GM12878 (cell line): ENCODE measurements at regions of chr5 and their contacts with region 1.

Region 1: DNA sequence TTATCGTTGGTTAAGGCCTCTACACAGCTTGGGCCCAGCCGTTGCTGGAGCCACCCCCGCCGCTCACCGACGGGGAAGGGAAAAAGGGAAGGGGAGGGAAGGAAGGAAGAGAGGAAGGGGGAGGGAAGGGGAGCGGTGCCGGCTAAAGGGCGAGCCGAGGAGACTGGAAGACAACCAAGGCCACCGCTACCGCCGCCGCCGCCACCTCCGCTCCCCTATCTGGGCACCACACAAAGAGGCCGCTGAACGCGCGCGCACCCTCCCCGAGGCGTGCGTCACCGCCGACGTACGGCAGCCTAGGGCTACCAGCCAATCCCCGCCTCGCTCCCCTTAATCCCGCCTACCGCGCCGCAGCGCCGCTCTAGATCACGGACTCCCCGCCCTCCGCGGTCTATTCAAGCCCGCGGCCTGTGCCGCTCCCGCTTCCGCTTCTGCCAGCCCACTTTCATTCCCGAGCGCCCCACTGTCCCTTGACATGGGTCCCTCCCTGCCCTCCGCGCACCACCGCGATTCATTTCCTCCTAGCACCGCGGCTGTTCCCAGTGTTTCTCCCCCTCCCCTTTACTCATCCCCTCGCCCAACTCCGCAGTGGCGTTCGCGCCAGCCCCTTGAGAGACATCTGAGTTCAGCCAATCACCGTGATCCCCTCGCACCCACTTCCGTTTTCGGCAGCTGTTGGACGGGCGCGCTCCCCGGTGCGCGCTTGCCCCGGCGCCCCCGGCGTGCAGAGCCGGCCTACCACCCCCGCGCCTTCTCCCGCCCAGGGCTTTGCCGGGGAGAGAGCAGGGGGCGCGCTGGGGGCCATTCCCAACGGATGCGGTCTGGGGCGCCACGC is at the start of gene HNRNPA0:
- DNase-seq: peak; percentile 88
- ATAC-seq: peak; percentile 88
- H3K4me3 ChIP-seq: peak within 1 kb of the TSS; percentile 91
- H3K27ac ChIP-seq: peak within 1 kb of the TSS; percentile 96
- H3K4me1 ChIP-seq: peaks cover 28% of the 10 kb centered on the region
- H3K27me3 ChIP-seq: no peaks in the 10 kb centered on the region
- CTCF ChIP-seq: no peak
- EP300 ChIP-seq: peak in 1 of 2 experiments; percentile 100; a peak in 2 of 4 replicates
- POLR2A ChIP-seq: peak; percentile 86
- RAD21 ChIP-seq: no peak
- polyA plus RNA-seq, gene HNRNPA0: 7.3 to 8.2 TPM

Region 2: DNA sequence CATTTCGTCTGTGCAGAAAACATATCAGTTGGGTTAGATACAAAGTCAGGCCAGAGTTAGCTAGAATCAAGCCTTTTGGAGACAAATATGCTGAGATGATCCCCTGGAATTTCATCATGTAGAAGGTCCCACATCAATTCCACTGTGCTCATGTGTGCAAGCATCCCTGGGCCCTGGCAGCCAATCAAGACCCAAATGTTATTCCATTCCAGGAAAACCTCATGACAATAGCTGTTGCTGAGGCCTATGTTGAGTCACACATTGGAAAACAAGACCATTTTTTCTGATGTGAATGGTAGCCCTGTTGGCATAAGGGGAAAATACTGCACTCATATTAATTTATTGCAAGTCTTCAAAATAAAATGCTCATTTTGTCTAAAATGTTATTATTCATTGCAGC is 266.7 kb before region 1 on chr5:
- CTCF ChIA-PET with region 1: no interaction called
- POLR2A ChIA-PET with region 1: no interaction called
- RAD21 ChIA-PET with region 1: no interaction called
- SMC1A ChIA-PET with region 1: no interaction called
- in situ Hi-C with region 1: no loop called
- intact Hi-C with region 1: no loop called
- DNase-seq: no peak
- ATAC-seq: no peak
- H3K4me3 ChIP-seq: no peak overlapping the region
- H3K27ac ChIP-seq: no peak overlapping the region
- H3K4me1 ChIP-seq: no peaks in the 10 kb centered on the region
- H3K27me3 ChIP-seq: no peaks in the 10 kb centered on the region; a peak in 1 of 4 replicates
- CTCF ChIP-seq: no peak
- EP300 ChIP-seq: no peak
- POLR2A ChIP-seq: no peak
- RAD21 ChIP-seq: no peak

Region 3: DNA sequence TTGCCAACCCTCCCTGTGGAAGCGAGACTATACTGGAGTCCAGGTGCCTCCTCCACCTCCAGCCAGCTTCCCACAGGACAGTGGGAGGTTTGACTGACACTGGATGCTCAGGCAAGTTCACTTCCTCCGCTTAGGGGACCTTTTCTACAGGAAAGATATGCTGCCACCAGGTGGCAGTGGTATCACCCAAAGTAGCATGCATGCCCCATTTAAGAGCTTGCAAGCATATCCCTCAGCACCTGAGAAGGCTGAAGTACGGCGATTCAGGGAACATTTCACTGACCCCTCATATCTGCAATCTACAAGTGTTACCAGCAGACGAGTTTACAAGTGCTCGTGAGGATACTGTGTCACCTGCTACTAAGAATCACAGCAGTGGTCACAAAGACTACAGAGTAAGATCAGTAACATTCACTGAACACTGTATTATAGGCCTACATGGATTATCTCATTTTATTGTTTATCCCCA is 94.0 kb before region 1 on chr5:
- CTCF ChIA-PET with region 1: interaction called, 14 read pairs
- POLR2A ChIA-PET with region 1: interaction called, 4 read pairs
- RAD21 ChIA-PET with region 1: interaction called, 9 read pairs
- SMC1A ChIA-PET with region 1: interaction called, 14 read pairs
- in situ Hi-C with region 1: no loop called
- intact Hi-C with region 1: no loop called
- DNase-seq: peak; percentile 40
- ATAC-seq: peak; percentile 100
- H3K4me3 ChIP-seq: no peak overlapping the region
- H3K27ac ChIP-seq: no peak overlapping the region
- H3K4me1 ChIP-seq: no peaks in the 10 kb centered on the region
- H3K27me3 ChIP-seq: no peaks in the 10 kb centered on the region
- CTCF ChIP-seq: peak; percentile 76 to 84 (median 83)
- EP300 ChIP-seq: no peak
- POLR2A ChIP-seq: no peak
- RAD21 ChIP-seq: peak; percentile 85

Region 4: GRCh38 chr5:137695651-137696428 is 58.5 kb before region 1 on chr5:
- CTCF ChIA-PET with region 1: no interaction called
- POLR2A ChIA-PET with region 1: no interaction called
- RAD21 ChIA-PET with region 1: no interaction called
- SMC1A ChIA-PET with region 1: no interaction called
- in situ Hi-C with region 1: no loop called
- intact Hi-C with region 1: no loop called
- DNase-seq: no peak
- ATAC-seq: no peak
- H3K4me3 ChIP-seq: no peak overlapping the region
- H3K27ac ChIP-seq: peak overlapping the region; percentile 21; the same call in 1 of the 2 replicates
- H3K4me1 ChIP-seq: peaks cover 7% of the 10 kb centered on the region
- H3K27me3 ChIP-seq: no peaks in the 10 kb centered on the region
- CTCF ChIP-seq: peak in 2 of 3 experiments; percentile 12 to 15; a peak in 1 of 6 replicates
- EP300 ChIP-seq: no peak
- POLR2A ChIP-seq: no peak
- RAD21 ChIP-seq: no peak

Region 5: DNA sequence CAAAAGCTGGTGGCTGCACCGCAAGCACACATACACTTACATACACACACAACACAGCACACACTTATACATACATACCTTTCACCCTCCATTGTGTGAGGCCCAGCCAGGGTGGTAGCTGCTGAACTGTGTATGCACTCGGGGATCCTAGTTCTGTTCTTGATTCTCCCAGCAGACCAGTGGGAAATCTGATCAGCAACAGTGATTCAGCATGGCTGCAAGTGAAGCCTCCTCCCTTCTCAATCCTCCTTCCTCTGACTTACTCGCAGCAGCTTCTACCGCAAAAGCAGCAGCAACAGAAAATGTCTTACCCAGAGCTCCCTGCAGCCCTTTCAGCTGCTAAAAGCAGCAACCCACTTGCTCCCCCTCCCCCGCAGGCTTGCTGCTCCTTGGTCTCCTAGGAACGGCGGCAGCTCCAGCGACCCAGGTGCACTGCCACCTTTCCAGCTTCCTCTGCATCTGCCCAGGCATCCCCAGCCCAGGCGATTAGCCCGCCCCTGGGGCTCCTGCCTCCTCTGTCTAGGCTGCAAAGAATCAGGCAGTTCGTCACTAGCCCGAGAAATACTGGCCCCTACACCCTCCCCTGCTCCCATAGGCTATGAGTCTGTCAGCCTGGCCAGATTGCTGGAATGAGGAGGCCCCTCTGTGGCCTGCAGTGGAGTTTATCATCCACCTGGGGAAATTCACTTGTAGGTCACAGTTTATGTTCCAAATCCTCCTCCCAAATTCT is 18.6 kb before region 1 on chr5 and contains the start of gene KLHL3:
- CTCF ChIA-PET with region 1: interaction called, 56 read pairs
- POLR2A ChIA-PET with region 1: interaction called, 14 read pairs
- RAD21 ChIA-PET with region 1: interaction called, 7 read pairs
- SMC1A ChIA-PET with region 1: interaction called, 5 read pairs
- in situ Hi-C with region 1: no loop called
- intact Hi-C with region 1: no loop called
- DNase-seq: no peak
- ATAC-seq: peak; percentile 74
- H3K4me3 ChIP-seq: peak within 1 kb of the TSS; percentile 61
- H3K27ac ChIP-seq: peak within 1 kb of the TSS; percentile 86
- H3K4me1 ChIP-seq: peaks cover 15% of the 10 kb centered on the region
- H3K27me3 ChIP-seq: no peaks in the 10 kb centered on the region
- CTCF ChIP-seq: peak; percentile 7 to 44 (median 17); a peak in 3 of 6 replicates
- EP300 ChIP-seq: no peak
- POLR2A ChIP-seq: peak; percentile 52
- RAD21 ChIP-seq: peak; percentile 69
- polyA plus RNA-seq, gene KLHL3: 1.7 to 2.3 TPM

Region 6: DNA sequence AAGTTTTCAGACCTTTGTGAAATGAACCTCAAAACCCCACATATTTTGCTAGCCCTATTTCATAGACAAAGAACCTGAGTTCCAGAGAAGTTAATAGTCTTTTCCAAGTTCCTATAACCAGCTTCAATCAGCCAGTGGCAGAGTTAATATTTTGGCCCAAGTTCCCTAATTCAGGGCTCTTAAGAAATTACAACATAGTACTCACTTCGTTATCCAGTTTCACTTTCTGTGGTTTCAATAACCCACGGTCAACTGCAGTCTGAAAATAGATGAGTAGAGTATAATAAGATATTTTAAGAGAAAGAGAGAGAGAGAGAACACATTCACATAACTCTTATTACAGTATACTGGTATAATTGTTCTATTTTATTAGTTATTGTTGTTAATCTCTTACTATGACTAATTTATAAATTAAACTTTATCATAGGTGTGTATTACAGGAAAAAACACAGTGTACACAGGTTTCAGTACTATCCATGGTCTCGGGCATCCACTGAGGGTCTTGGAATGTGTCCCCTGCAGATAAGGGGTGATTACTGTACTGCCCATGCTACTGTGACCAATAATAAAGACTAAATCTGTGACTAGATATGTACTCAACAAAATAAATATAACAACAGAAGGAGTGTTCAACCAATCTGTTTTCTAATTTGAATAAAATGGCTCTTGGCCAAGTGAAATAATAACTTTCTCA is 104.0 kb after region 1 on chr5:
- CTCF ChIA-PET with region 1: no interaction called
- POLR2A ChIA-PET with region 1: no interaction called
- RAD21 ChIA-PET with region 1: no interaction called
- SMC1A ChIA-PET with region 1: no interaction called
- in situ Hi-C with region 1: no loop called
- intact Hi-C with region 1: loop called (anchors 1 kb)
- DNase-seq: peak; percentile 58
- ATAC-seq: peak; percentile 91
- H3K4me3 ChIP-seq: no peak overlapping the region
- H3K27ac ChIP-seq: peak overlapping the region; percentile 11
- H3K4me1 ChIP-seq: peaks cover 29% of the 10 kb centered on the region
- H3K27me3 ChIP-seq: no peaks in the 10 kb centered on the region
- CTCF ChIP-seq: no peak
- EP300 ChIP-seq: no peak
- POLR2A ChIP-seq: no peak
- RAD21 ChIP-seq: no peak

Region 7: GRCh38 chr5:138024117-138024516 is 269.8 kb after region 1 on chr5:
- CTCF ChIA-PET with region 1: interaction called, 5 read pairs
- POLR2A ChIA-PET with region 1: interaction called, 7 read pairs
- RAD21 ChIA-PET with region 1: interaction called, 13 read pairs
- SMC1A ChIA-PET with region 1: interaction called, 3 read pairs
- in situ Hi-C with region 1: no loop called
- intact Hi-C with region 1: no loop called
- DNase-seq: no peak
- ATAC-seq: no peak
- H3K4me3 ChIP-seq: no peak overlapping the region
- H3K27ac ChIP-seq: no peak overlapping the region
- H3K4me1 ChIP-seq: peaks cover 13% of the 10 kb centered on the region
- H3K27me3 ChIP-seq: no peaks in the 10 kb centered on the region
- CTCF ChIP-seq: no peak
- EP300 ChIP-seq: no peak
- POLR2A ChIP-seq: no peak
- RAD21 ChIP-seq: no peak

Region 8: GRCh38 chr5:138128334-138128733 is 374.0 kb after region 1 on chr5:
- CTCF ChIA-PET with region 1: interaction called, 10 read pairs
- POLR2A ChIA-PET with region 1: no interaction called
- RAD21 ChIA-PET with region 1: no interaction called
- SMC1A ChIA-PET with region 1: no interaction called
- in situ Hi-C with region 1: no loop called
- intact Hi-C with region 1: no loop called
- DNase-seq: no peak
- ATAC-seq: no peak
- H3K4me3 ChIP-seq: no peak overlapping the region
- H3K27ac ChIP-seq: no peak overlapping the region
- H3K4me1 ChIP-seq: no peaks in the 10 kb centered on the region
- H3K27me3 ChIP-seq: no peaks in the 10 kb centered on the region
- CTCF ChIP-seq: no peak
- EP300 ChIP-seq: no peak
- POLR2A ChIP-seq: no peak
- RAD21 ChIP-seq: no peak